ENCODE measurements at regions of chr16 and their contacts with region 1.

Region 1: GRCh38 chr16:489606-490005 is 37.9 kb upstream of the CAPN15 start:
- DNase-seq: no peak
- H3K4me3 Mint-ChIP-seq: no peak overlapping the region
- H3K27ac Mint-ChIP-seq: no peak overlapping the region
- H3K4me1 Mint-ChIP-seq: no peaks in the 10 kb centered on the region
- H3K27me3 Mint-ChIP-seq: no peaks in the 10 kb centered on the region

Region 2: GRCh38 chr16:391885-392335 is 97.7 kb before region 1 on chr16:
- CTCF ChIA-PET with region 1: interaction called, 5 read pairs
- POLR2A ChIA-PET with region 1: no interaction called
- intact Hi-C with region 1: loop called (anchors 5 kb)
- DNase-seq: peak; percentile 90
- H3K4me3 Mint-ChIP-seq: no peak overlapping the region
- H3K27ac Mint-ChIP-seq: peak overlapping the region; percentile 54
- H3K4me1 Mint-ChIP-seq: peaks cover 20% of the 10 kb centered on the region
- H3K27me3 Mint-ChIP-seq: no peaks in the 10 kb centered on the region